ENCODE measurements at regions of chr19 and their contacts with region 1.

Region 1: GRCh38 chr19:33241530-33242101 is 16.0 kb upstream of the SLC7A10 start:
- DNase-seq: no peak
- H3K4me3 ChIP-seq: no peak overlapping the region
- H3K27ac ChIP-seq: no peak overlapping the region
- H3K4me1 ChIP-seq: no peaks in the 10 kb centered on the region
- H3K27me3 ChIP-seq: no peaks in the 10 kb centered on the region
- CTCF ChIP-seq: peak; percentile 72

Region 2: GRCh38 chr19:33302175-33302973 is 60.8 kb after region 1 on chr19 and contains the start of gene CEBPA:
- CTCF ChIA-PET with region 1: no interaction called
- POLR2A ChIA-PET with region 1: no interaction called
- intact Hi-C with region 1: loop called (anchors 2 kb)
- DNase-seq: peak; percentile 64 to 90
- H3K4me3 ChIP-seq: peak within 1 kb of the TSS; percentile 91
- H3K27ac ChIP-seq: no peak within 1 kb of the TSS
- H3K4me1 ChIP-seq: peaks cover 35% of the 10 kb centered on the region
- H3K27me3 ChIP-seq: no peaks in the 10 kb centered on the region
- CTCF ChIP-seq: no peak
- total RNA-seq, gene CEBPA: 8.9 and 9.2 TPM in 2 replicates

Measured in PC-9 (cell line).